MCF 10A (cell line): ENCODE measurements at regions of chr4 and their contacts with region 1.

Region 1: GRCh38 chr4:84966383-84967242 is at the start of gene WDFY3:
- DNase-seq: peak; percentile 93
- H3K4me3 Mint-ChIP-seq: peak within 1 kb of the TSS; percentile 88
- H3K27ac Mint-ChIP-seq: peak within 1 kb of the TSS; percentile 97
- H3K4me1 Mint-ChIP-seq: peaks cover 4% of the 10 kb centered on the region
- H3K27me3 Mint-ChIP-seq: no peaks in the 10 kb centered on the region
- CTCF ChIP-seq: no peak
- total RNA-seq, gene WDFY3: 73.7 and 90.7 TPM in 2 replicates

Region 2: DNA sequence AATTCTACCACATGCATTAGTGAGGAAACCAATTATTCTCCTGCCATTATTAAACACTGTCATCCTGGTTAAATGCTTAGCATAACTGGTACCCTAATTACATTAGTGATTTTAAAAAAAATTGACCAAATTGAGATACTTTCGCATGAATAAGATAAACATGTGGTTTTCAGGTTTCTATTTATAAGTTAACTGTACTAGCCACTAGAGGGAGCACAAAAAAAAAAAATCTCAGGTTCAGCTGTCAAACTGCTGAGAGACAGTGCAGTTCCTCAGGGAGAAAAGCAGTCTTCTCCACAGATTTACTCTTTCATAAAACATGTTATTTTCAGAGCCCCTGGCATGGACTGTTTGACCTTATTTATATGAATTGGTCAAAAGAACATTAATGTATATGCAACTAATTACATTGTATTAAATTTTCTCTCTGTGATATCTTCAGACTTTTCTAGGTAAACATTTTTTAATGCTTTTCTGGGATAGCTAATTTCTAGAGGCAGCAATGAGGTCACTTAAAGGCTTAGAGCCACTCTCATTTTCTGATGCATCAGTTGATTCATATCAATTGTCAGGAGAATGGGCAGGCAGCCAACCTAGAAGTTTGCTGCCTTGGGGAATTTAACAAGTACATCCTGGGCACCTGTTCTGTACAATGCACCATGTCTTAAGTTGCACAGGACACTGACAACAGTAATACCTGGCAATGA is 216.2 kb before region 1 on chr4:
- CTCF ChIA-PET with region 1: interaction called, 58 read pairs
- POLR2A ChIA-PET with region 1: interaction called, 14 read pairs
- intact Hi-C with region 1: loop called (anchors 1 kb)
- DNase-seq: peak; percentile 51
- H3K4me3 Mint-ChIP-seq: no peak overlapping the region
- H3K27ac Mint-ChIP-seq: no peak overlapping the region
- H3K4me1 Mint-ChIP-seq: no peaks in the 10 kb centered on the region
- H3K27me3 Mint-ChIP-seq: no peaks in the 10 kb centered on the region
- CTCF ChIP-seq: peak; percentile 42

Region 3: GRCh38 chr4:84814094-84814750 is 152.4 kb before region 1 on chr4:
- CTCF ChIA-PET with region 1: interaction called, 4 read pairs
- POLR2A ChIA-PET with region 1: no interaction called
- intact Hi-C with region 1: loop called (anchors 1 kb)
- DNase-seq: peak; percentile 89
- H3K4me3 Mint-ChIP-seq: no peak overlapping the region
- H3K27ac Mint-ChIP-seq: peak overlapping the region; percentile 93
- H3K4me1 Mint-ChIP-seq: peaks cover 17% of the 10 kb centered on the region
- H3K27me3 Mint-ChIP-seq: no peaks in the 10 kb centered on the region
- CTCF ChIP-seq: no peak

Region 4: GRCh38 chr4:84915396-84915780 is 51.2 kb before region 1 on chr4:
- CTCF ChIA-PET with region 1: no interaction called
- POLR2A ChIA-PET with region 1: interaction called, 13 read pairs
- intact Hi-C with region 1: loop called (anchors 5 kb)
- DNase-seq: no peak
- H3K4me3 Mint-ChIP-seq: no peak overlapping the region
- H3K27ac Mint-ChIP-seq: no peak overlapping the region
- H3K4me1 Mint-ChIP-seq: peaks cover 27% of the 10 kb centered on the region
- H3K27me3 Mint-ChIP-seq: no peaks in the 10 kb centered on the region
- CTCF ChIP-seq: no peak

Region 5: DNA sequence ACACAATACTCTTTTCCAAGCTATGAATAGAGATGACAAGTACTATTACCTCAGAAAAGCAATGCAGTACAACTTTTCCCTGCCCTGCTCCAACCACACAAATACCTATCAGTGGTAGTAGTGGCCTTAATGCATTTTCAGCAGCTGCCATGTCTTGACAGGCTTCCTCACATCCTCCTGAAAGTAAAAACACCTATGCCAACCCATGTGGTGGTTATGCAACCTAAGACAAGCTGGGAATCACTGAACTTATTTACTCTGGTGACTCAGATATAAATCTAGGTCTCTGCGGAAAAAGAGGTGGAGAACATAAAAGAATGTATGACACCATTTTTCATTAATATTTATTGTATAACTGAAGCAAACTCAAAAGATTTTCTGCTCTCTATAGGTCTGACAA is 14.6 kb before region 1 on chr4:
- CTCF ChIA-PET with region 1: interaction called, 6 read pairs
- POLR2A ChIA-PET with region 1: interaction called, 40 read pairs
- intact Hi-C with region 1: no loop called
- DNase-seq: peak; percentile 93
- H3K4me3 Mint-ChIP-seq: no peak overlapping the region
- H3K27ac Mint-ChIP-seq: peak overlapping the region; percentile 74
- H3K4me1 Mint-ChIP-seq: peaks cover 36% of the 10 kb centered on the region
- H3K27me3 Mint-ChIP-seq: no peaks in the 10 kb centered on the region
- CTCF ChIP-seq: no peak

Region 6: GRCh38 chr4:85067342-85067741 is 100.7 kb after region 1 on chr4:
- CTCF ChIA-PET with region 1: no interaction called
- POLR2A ChIA-PET with region 1: no interaction called
- intact Hi-C with region 1: no loop called
- DNase-seq: no peak
- H3K4me3 Mint-ChIP-seq: no peak overlapping the region
- H3K27ac Mint-ChIP-seq: no peak overlapping the region
- H3K4me1 Mint-ChIP-seq: no peaks in the 10 kb centered on the region
- H3K27me3 Mint-ChIP-seq: no peaks in the 10 kb centered on the region
- CTCF ChIP-seq: no peak

Region 7: GRCh38 chr4:85166316-85166715 is 199.7 kb after region 1 on chr4:
- CTCF ChIA-PET with region 1: no interaction called
- POLR2A ChIA-PET with region 1: no interaction called
- intact Hi-C with region 1: no loop called
- DNase-seq: no peak
- H3K4me3 Mint-ChIP-seq: no peak overlapping the region
- H3K27ac Mint-ChIP-seq: no peak overlapping the region
- H3K4me1 Mint-ChIP-seq: peaks cover 10% of the 10 kb centered on the region
- H3K27me3 Mint-ChIP-seq: no peaks in the 10 kb centered on the region
- CTCF ChIP-seq: no peak